Activated CD4-positive, alpha-beta T cell treated with anti-CD3 and anti-CD28 coated beads, Interleukin-2, amount 10 ng/mL, durations not matched to agents 24 days and 14 days (primary cell): ENCODE measurements at regions of chr2 and their contacts with region 1.

Region 1: DNA sequence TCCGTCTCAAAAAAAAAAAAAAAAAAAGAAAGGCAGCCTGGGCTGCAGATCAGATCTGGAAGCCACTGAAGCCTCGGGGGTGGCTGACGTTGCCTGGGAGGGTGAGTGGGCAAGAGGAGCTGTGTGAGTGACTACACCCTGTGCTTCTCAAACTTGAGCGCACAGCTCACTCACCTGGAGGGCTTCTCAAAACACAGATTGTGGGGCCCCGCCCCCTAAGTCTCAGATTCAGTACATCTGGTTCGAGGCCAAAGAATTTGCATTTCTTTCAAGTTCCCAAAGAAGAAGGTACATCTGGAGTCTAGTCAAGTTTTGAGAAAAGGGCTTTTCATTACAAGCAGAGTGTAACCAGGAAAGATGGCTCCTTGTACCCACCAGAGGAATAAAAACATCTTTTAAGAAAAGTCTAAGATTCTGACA is 97.7 kb upstream of the CAB39 start:
- DNase-seq: peak; percentile 79
- H3K4me3 Mint-ChIP-seq: peak overlapping the region; percentile 15
- H3K27ac Mint-ChIP-seq: peak overlapping the region; percentile 51
- H3K4me1 Mint-ChIP-seq: peaks cover 45% of the 10 kb centered on the region
- H3K27me3 Mint-ChIP-seq: no peaks in the 10 kb centered on the region

Region 2: GRCh38 chr2:230007931-230008707 is 606.8 kb before region 1 on chr2:
- intact Hi-C with region 1: loop called (anchors 1 kb)
- DNase-seq: peak; percentile 94
- H3K4me3 Mint-ChIP-seq: no peak overlapping the region
- H3K27ac Mint-ChIP-seq: no peak overlapping the region
- H3K4me1 Mint-ChIP-seq: peaks cover 2% of the 10 kb centered on the region
- H3K27me3 Mint-ChIP-seq: no peaks in the 10 kb centered on the region

Region 3: GRCh38 chr2:230225486-230225885 is 389.4 kb before region 1 on chr2 and contains the start of gene SP140:
- intact Hi-C with region 1: loop called (anchors 5 kb)
- DNase-seq: peak; percentile 95
- H3K4me3 Mint-ChIP-seq: peak within 1 kb of the TSS; percentile 85
- H3K27ac Mint-ChIP-seq: peak within 1 kb of the TSS; percentile 98
- H3K4me1 Mint-ChIP-seq: peaks cover 62% of the 10 kb centered on the region
- H3K27me3 Mint-ChIP-seq: no peaks in the 10 kb centered on the region
- total RNA-seq, gene SP140: 236 and 241 TPM in 2 replicates

Region 4: DNA sequence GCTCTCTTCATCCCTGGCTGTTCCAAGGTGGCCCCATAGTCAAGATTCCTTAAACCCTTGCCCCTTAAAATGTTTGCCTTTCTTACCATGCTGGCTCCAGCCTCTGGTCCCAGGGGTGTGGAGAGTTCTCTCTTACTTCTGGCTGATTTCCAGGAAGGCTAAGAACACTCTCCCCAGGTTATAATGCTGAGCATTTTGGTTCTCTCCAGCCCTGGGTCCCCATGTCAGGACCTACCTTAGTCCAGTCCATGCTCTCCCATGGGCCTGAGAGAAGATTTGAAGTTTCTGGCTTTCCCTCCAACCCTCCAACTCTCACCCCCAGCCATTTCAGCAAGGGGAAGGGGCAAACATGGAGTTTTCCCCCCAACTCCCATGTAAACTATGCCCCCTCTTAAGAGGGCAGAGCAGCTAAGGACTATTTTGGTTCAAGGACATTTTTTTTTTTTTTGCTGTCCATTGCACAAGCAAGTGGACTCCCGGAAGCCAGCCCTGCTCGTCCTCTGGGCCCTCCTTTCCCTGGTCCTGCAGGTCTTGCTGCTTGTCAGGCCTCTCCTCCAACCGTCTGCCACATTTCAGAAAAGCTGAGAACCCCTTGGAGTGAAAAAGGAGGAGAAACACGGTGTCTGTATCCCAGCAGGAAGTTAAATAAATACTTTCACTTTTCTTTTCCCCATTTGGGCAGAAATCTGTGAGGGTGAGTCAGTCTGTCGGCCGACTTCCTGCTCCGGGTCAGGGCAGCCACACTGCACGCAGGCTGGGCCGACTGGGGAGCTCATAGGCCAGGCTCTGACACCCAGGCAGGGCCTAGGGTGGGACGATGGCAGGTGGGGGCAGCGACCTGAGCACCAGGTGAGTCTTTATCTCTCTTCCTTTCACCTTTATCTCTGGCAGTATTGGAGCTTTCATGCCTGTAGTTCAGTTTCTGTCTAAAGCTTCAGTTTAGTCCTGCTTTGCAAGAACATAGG is 288.2 kb before region 1 on chr2 and contains the start of gene SP140L:
- intact Hi-C with region 1: loop called (anchors 5 kb)
- DNase-seq: peak; percentile 94
- H3K4me3 Mint-ChIP-seq: peak within 1 kb of the TSS; percentile 92
- H3K27ac Mint-ChIP-seq: peak within 1 kb of the TSS; percentile 90
- H3K4me1 Mint-ChIP-seq: peaks cover 67% of the 10 kb centered on the region
- H3K27me3 Mint-ChIP-seq: no peaks in the 10 kb centered on the region
- total RNA-seq, gene SP140L: 48.9 and 49.1 TPM in 2 replicates

Region 5: DNA sequence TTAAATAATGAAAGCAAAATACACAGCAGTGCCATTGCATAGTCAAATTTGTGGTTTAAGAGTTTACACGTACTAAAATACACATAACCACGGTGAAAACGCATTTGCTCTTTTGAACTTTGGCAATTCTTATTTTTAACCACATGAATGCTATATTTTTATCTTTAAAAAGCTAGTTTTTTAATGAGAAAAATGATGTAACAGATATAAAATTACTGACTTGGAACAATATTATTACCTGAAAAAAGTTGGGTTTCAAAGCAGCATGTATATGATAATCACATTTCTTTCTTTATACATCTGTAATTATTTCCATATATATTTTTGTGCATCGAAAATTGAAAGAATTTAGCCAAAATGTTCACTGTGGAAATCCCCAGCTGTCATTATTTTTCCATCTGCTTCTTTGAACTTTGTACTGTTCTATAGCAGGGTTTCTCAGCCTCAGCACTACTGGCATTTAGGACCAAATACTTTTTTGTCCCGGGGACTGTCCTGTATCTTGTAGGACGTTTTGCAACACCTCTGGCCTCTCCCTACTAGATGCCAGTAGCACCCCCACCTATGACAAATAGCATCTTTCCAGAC is 21.9 kb after region 1 on chr2:
- intact Hi-C with region 1: loop called (anchors 2 kb)
- DNase-seq: peak; percentile 67
- H3K4me3 Mint-ChIP-seq: no peak overlapping the region
- H3K27ac Mint-ChIP-seq: peak overlapping the region; percentile 85
- H3K4me1 Mint-ChIP-seq: peaks cover 15% of the 10 kb centered on the region
- H3K27me3 Mint-ChIP-seq: no peaks in the 10 kb centered on the region